ENCODE measurements at regions of chr4 and their contacts with region 1.

Region 1: DNA sequence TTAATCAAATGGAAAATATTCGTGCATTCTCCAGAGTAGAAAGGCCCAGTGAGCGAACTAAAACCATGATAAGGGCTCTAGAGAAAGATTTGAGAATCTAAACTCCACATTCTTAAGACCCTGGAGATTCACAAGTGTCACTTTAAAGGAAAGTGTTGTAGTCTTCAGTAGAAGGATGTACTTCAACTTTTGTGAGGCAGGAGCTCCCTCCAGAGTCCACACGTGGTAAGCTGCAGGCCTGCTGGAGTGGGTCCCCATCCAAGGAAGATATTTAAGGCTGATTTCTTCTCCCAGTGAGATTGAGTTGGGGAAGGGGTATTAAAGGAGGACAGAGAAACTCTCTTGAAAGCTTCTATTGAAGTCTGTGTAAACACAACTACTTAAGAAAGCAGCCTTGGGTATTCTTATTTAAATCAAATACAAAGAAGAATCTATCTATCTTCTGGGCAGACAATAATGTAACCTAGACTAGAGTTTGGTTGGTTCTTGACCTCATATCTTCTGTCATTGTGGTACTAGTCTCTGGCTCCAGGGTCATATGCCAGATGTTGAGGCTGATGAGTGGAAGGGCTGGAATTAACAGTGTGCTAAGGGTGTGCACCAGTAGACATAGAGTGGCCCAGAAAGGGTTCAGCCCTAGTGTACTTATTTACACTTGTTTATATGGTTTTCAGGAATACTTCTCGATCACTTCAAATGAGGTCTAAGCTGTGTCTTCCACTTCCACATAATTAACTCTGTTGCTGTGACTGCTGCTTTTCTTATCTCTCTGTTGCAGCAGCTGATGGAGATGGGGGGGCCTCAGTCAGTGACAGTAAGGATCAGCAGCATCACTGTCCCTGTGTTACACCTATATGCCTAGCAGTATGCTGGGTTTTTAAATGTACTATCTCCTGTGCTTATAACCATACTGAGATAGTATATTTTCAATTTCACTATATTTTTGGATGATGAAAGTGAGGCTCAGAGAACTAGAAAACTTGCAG is 76.1 kb downstream of the HMGB2 start:
- DNase-seq: peak; percentile 74
- H3K4me3 ChIP-seq: no peak overlapping the region
- H3K27ac ChIP-seq: no peak overlapping the region
- H3K4me1 ChIP-seq: peaks cover 2% of the 10 kb centered on the region
- H3K27me3 ChIP-seq: no peaks in the 10 kb centered on the region
- CTCF ChIP-seq: peak; percentile 76 to 93
- POLR2A ChIP-seq: no peak

Region 2: GRCh38 chr4:172892300-172892699 is 365.7 kb before region 1 on chr4:
- CTCF ChIA-PET with region 1: interaction called, 16 read pairs
- POLR2A ChIA-PET with region 1: no interaction called
- dilution Hi-C with region 1: no loop called
- intact Hi-C with region 1: loop called (anchors 1 kb)
- DNase-seq: peak; percentile 40
- H3K4me3 ChIP-seq: no peak overlapping the region
- H3K27ac ChIP-seq: no peak overlapping the region
- H3K4me1 ChIP-seq: no peaks in the 10 kb centered on the region
- H3K27me3 ChIP-seq: no peaks in the 10 kb centered on the region
- CTCF ChIP-seq: peak; percentile 51 to 72
- POLR2A ChIP-seq: no peak

Region 3: DNA sequence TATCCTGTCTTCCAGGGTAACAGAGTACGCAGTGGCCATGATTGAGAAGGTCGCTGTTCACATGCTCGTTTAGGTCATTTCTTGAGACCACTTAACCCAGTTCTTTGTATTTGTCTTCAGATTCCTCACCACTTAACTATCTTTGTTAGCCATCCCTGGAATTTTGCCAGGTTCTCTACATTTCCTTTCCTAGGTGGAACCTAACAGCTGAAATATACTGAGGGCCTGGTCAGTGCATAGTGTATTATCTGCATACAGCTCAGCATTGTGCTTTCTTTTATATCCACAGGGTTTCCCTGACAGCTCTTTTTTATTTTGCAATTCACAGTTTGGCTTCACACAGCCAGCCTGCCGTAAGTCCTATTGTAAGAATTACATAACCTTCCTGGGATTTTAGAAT is 238.3 kb before region 1 on chr4:
- CTCF ChIA-PET with region 1: interaction called, 403 read pairs
- POLR2A ChIA-PET with region 1: no interaction called
- dilution Hi-C with region 1: no loop called
- intact Hi-C with region 1: no loop called
- DNase-seq: no peak
- H3K4me3 ChIP-seq: no peak overlapping the region
- H3K27ac ChIP-seq: no peak overlapping the region
- H3K4me1 ChIP-seq: no peaks in the 10 kb centered on the region
- H3K27me3 ChIP-seq: no peaks in the 10 kb centered on the region
- CTCF ChIP-seq: no peak
- POLR2A ChIP-seq: no peak

Region 4: DNA sequence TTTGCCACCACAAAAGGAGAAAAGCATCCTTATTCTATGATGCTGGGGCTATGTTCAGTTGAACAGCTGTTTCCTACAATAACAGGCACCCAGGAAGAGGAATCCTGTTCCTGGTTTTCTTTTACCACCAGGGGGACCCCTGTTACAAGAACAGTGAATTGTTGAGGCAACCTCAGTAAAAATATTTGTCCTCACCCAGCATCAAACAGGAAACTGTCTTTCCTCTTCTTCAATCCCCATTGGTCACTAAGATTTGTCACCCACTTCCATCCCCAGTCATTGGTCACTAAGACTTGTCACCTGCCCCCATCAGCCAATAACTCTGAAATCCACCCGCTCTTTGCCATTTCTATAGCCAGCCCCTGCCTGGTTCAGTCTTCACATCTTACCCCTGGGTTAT is 232.9 kb before region 1 on chr4:
- CTCF ChIA-PET with region 1: interaction called, 67 read pairs
- POLR2A ChIA-PET with region 1: no interaction called
- dilution Hi-C with region 1: no loop called
- intact Hi-C with region 1: loop called (anchors 1 kb)
- DNase-seq: peak; percentile 38
- H3K4me3 ChIP-seq: no peak overlapping the region
- H3K27ac ChIP-seq: no peak overlapping the region
- H3K4me1 ChIP-seq: no peaks in the 10 kb centered on the region
- H3K27me3 ChIP-seq: no peaks in the 10 kb centered on the region
- CTCF ChIP-seq: peak; percentile 33 to 41
- POLR2A ChIP-seq: no peak

Region 5: GRCh38 chr4:173039617-173040577 is 218.1 kb before region 1 on chr4:
- CTCF ChIA-PET with region 1: interaction called, 11 read pairs
- POLR2A ChIA-PET with region 1: no interaction called
- dilution Hi-C with region 1: no loop called
- intact Hi-C with region 1: no loop called
- DNase-seq: peak; percentile 88
- H3K4me3 ChIP-seq: no peak overlapping the region
- H3K27ac ChIP-seq: no peak overlapping the region
- H3K4me1 ChIP-seq: no peaks in the 10 kb centered on the region
- H3K27me3 ChIP-seq: peaks cover 0 to 2% of the 10 kb centered on the region in 2 experiments
- CTCF ChIP-seq: no peak
- POLR2A ChIP-seq: no peak

Region 6: DNA sequence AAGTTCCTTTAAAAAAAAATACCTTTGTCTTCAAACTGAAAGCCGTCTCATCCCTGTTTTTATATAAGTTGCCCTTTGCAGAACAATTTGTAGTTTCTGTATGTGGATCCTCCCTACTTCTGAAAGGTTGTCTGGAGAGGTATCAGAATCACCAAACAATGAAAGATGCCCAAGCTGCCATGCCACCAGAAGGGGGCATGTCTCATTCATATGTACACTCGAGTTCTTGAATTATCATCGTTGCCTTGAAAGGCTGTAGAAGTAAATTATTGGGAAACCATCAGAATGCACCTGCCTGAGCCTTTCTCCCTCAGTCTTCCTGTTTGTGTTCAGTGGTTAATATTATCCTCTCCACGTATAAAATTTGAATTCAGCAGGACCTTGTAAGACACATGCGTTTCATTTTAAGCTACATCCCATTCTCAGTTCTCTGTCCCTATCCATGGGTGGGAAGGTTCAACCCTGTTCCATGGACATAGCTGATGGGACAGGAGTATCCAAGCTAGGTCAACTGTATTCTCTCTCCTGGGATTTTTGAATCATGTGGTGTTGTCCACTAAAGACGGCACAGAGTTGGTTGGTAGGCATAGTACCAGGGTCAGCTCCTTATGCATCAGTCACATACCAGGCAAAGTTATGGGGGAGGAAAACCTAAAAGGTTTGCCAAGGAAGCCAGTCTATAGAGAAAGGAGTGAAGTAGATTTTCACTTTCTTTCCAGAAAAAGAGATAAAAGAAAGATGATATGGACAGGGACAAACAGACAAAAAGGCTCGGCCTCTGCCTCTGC is 65.5 kb before region 1 on chr4:
- CTCF ChIA-PET with region 1: interaction called, 10 read pairs
- POLR2A ChIA-PET with region 1: no interaction called
- dilution Hi-C with region 1: no loop called
- intact Hi-C with region 1: loop called (anchors 2 kb)
- DNase-seq: peak; percentile 38
- H3K4me3 ChIP-seq: no peak overlapping the region
- H3K27ac ChIP-seq: no peak overlapping the region
- H3K4me1 ChIP-seq: peaks cover 19% of the 10 kb centered on the region
- H3K27me3 ChIP-seq: no peaks in the 10 kb centered on the region
- CTCF ChIP-seq: peak in 1 of 2 donors; percentile 26
- POLR2A ChIP-seq: no peak

Region 7: GRCh38 chr4:173301518-173302201 is 43.6 kb after region 1 on chr4:
- CTCF ChIA-PET with region 1: interaction called, 12 read pairs
- POLR2A ChIA-PET with region 1: no interaction called
- dilution Hi-C with region 1: no loop called
- intact Hi-C with region 1: loop called (anchors 1 kb)
- DNase-seq: peak; percentile 38
- H3K4me3 ChIP-seq: no peak overlapping the region
- H3K27ac ChIP-seq: no peak overlapping the region
- H3K4me1 ChIP-seq: no peaks in the 10 kb centered on the region
- H3K27me3 ChIP-seq: no peaks in the 10 kb centered on the region
- CTCF ChIP-seq: peak; percentile 52 to 53
- POLR2A ChIP-seq: no peak

Region 8: GRCh38 chr4:173466101-173466500 is 208.1 kb after region 1 on chr4:
- CTCF ChIA-PET with region 1: no interaction called
- POLR2A ChIA-PET with region 1: no interaction called
- dilution Hi-C with region 1: no loop called
- intact Hi-C with region 1: no loop called
- DNase-seq: no peak
- H3K4me3 ChIP-seq: no peak overlapping the region
- H3K27ac ChIP-seq: no peak overlapping the region
- H3K4me1 ChIP-seq: no peaks in the 10 kb centered on the region
- H3K27me3 ChIP-seq: no peaks in the 10 kb centered on the region
- CTCF ChIP-seq: no peak
- POLR2A ChIP-seq: no peak